Dorsolateral prefrontal cortex (tissue), 120 donors: ENCODE measurements at regions of chr15 and their contacts with region 1.

Region 1: GRCh38 chr15:34101366-34102175 is at the starts of genes EMC7 and PGBD4:
- DNase-seq: peak; percentile 97 to 99 (median 98)
- H3K4me3 ChIP-seq: peak within 1 kb of the TSS; percentile 64 to 99 (median 91)
- H3K27ac ChIP-seq: peak within 1 kb of the TSS; percentile 27 to 93 (median 85)
- H3K27me3 ChIP-seq: no peaks in the 10 kb centered on the region
- CTCF ChIP-seq: peak in 34 of 56 donors; percentile 7 to 56 (median 28)
- total RNA-seq, gene EMC7: 37.5 to 71.0 (median 53.4) TPM
- total RNA-seq, gene PGBD4: 2.6 to 6.9 (median 4.9) TPM

Region 2: GRCh38 chr15:34038023-34038870 is 63.3 kb before region 1 on chr15:
- intact Hi-C with region 1: loop called in 1 of 2 experiments (anchors 5 kb)
- DNase-seq: peak; percentile 65 to 84 (median 73)
- H3K4me3 ChIP-seq: peak overlapping the region; percentile 59 to 97 (median 84)
- H3K27ac ChIP-seq: peak overlapping the region; percentile 51 to 96 (median 89)
- H3K27me3 ChIP-seq: no peaks in the 10 kb centered on the region
- CTCF ChIP-seq: peak in 14 of 56 donors; percentile 9 to 49 (median 28)

Region 3: DNA sequence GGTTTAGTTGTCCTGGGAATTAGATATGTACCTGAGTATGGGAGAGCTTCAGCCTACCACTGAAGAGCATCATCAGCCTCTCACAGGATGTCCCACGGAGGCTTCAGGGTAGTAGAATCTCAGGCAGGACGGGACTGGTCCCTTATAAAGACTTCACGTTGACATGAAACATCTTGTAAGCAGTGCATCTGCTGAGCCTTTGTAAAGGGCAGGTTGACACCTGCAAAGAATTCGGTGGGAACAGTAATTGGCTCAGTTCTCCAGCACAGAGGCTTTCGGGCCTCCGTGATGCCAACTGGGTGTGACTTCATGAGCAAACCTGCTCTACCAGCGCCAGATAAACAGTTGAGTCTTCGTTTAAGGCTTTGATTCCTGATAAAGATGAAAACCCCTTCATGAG is 35.6 kb before region 1 on chr15:
- intact Hi-C with region 1: loop called in 1 of 2 experiments (anchors 5 kb)
- DNase-seq: no peak
- H3K4me3 ChIP-seq: no peak overlapping the region
- H3K27ac ChIP-seq: no peak overlapping the region
- H3K27me3 ChIP-seq: no peaks in the 10 kb centered on the region
- CTCF ChIP-seq: no peak

Region 4: GRCh38 chr15:34154725-34155204 is 53.2 kb after region 1 on chr15:
- intact Hi-C with region 1: no loop called
- DNase-seq: no peak
- H3K4me3 ChIP-seq: no peak overlapping the region
- H3K27ac ChIP-seq: no peak overlapping the region
- H3K27me3 ChIP-seq: no peaks in the 10 kb centered on the region
- CTCF ChIP-seq: no peak

Region 5: DNA sequence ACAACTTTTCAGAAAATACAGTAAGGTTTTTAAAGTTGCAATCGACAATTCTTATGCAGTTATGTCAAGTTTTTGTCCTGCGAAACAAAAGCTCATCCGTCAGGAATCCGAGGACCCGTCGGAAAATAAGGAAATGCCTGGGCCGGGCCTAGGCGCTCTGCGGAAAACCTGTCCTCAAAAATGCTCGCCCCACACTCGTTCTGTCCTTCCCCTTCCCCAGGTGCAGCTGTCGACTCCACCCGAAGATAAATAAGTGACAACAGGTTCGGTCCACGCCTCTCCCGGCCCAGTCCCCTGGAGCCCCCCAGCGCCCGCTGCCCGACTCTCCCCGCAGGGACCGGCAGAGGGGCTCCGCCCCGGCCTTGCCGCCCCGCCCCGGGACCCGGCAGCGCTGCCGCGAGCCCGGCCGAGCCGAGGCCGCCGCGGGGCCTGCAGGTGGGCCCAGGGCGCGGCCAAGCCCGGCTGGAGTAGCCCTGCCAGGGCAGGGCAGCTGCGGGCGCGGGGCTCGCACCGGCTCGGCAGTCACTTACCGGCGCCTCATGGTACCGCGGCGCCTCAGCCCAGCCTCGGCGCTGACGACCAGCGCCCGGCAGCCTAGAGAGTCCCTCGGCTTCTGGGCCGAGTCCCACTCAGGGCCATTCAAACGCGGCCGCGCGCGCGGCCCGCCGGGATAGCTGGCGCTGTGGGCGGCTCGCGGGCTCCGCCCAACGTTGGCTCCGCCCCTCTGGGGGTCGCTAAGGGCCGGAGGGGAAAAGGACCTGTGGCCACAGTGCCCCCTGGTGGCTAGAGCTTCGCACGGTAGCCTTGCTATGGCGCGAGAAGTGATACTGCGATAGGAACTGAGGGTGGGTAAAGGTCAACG is 108.1 kb after region 1 on chr15 and contains the start of gene KATNBL1:
- intact Hi-C with region 1: loop called in 1 of 2 experiments (anchors 5 kb)
- DNase-seq: peak; percentile 91 to 97 (median 94)
- H3K4me3 ChIP-seq: peak within 1 kb of the TSS; percentile 47 to 85 (median 73)
- H3K27ac ChIP-seq: peak within 1 kb of the TSS in 39 of 59 donors; percentile 2 to 81 (median 60)
- H3K27me3 ChIP-seq: no peaks in the 10 kb centered on the region
- CTCF ChIP-seq: peak; percentile 87 to 99 (median 97)
- total RNA-seq, gene KATNBL1: 37.3 to 94.1 (median 63.6) TPM

Region 6: DNA sequence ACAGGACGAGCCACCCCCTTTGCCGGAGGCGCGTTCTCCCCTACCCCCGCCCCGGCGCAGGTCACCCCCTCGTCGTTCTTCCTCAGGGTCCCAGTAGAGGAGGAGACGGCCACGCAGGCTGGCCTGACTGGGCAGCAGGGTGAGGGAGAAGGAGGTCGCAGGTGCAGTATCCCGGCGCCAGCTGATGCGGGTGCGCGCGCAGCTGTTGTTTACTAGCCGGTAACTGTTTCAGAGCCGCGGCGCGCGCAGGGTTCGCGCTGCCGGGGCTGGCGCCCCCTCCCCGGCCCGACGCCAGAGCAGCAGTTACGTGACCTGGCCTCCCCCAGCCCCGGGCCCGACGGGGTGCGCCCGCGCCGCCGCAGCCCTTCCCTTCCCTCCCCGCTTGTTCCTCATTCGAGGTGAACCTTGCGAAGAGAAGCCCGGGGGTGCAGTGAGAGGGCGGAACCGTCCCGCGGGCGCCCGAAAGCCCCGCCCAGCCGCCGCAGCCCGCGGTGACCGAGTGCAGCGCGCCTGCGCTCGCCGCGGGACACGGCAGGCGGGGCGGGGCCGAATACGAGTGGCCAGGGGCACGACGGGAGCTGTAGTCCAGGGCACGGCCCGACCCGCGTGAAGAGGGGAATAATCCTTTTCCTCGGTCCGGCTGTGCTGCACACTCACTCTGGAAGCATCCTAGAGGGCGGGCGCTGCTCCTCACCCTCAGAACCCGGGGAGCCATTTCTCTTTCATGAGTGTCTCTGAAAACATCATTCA is 236.2 kb after region 1 on chr15 and contains the start of gene SLC12A6:
- intact Hi-C with region 1: loop called in 1 of 2 experiments (anchors 10 kb)
- DNase-seq: peak; percentile 85 to 95 (median 89)
- H3K4me3 ChIP-seq: peak within 1 kb of the TSS; percentile 62 to 98 (median 90)
- H3K27ac ChIP-seq: peak within 1 kb of the TSS; percentile 73 to 99 (median 96)
- H3K27me3 ChIP-seq: no peaks in the 10 kb centered on the region
- CTCF ChIP-seq: peak in 28 of 56 donors; percentile 8 to 57 (median 22)
- total RNA-seq, gene SLC12A6: 31.2 to 56.8 (median 43.6) TPM